ENCODE measurements at regions of chr13 and their contacts with region 1.

Region 1: DNA sequence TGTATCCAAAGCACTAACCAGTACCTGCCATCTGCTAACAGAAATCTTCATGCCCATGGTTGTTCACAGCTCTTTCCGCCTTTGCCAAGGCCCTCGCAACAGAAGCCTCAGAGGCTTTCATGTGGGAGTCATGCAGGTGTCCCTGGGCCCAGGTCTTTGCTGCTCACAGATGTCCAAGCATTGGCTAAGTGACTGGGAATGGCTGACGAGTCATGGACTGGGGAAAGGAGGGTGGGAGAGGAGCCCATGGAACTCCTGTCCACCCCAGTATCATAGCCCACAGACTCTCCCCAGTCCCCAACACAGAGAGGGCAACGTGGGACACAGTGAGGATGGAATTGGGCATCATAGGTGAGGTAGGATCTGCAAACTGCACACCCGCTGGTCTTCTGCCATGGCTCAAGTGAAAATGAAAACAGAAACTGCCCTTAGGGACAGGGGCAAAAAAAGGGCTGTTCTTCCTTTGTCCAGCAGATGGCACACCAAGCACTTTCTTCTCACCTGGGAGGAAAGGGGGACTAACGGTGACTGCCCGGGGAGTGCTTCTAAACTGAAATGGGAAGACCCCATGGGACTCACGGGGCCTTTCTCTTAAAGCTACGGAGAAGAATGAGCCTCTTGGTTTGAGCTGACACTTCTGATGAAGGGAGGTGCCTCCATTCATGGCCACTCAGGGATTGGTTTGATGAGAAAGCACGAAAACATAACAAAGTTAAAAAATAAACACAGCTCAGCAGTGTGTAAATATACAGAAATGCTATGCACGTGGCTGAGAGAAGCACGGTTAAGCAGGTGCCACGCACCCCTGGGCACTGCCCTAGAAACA is 11.1 kb upstream of the DHRS12 start:
- DNase-seq: peak; percentile 48 to 87 (median 77)
- ATAC-seq: peak; percentile 69 to 74
- H3K4me3 Mint-ChIP-seq: peak overlapping the region; percentile 52 to 83 (median 77)
- H3K27ac Mint-ChIP-seq: peak overlapping the region; percentile 91 to 99 (median 96)
- H3K4me1 Mint-ChIP-seq: peaks cover 38 to 89% (median 86%) of the 10 kb centered on the region in 4 donors
- H3K27me3 Mint-ChIP-seq: no peaks in the 10 kb centered on the region

Region 2: DNA sequence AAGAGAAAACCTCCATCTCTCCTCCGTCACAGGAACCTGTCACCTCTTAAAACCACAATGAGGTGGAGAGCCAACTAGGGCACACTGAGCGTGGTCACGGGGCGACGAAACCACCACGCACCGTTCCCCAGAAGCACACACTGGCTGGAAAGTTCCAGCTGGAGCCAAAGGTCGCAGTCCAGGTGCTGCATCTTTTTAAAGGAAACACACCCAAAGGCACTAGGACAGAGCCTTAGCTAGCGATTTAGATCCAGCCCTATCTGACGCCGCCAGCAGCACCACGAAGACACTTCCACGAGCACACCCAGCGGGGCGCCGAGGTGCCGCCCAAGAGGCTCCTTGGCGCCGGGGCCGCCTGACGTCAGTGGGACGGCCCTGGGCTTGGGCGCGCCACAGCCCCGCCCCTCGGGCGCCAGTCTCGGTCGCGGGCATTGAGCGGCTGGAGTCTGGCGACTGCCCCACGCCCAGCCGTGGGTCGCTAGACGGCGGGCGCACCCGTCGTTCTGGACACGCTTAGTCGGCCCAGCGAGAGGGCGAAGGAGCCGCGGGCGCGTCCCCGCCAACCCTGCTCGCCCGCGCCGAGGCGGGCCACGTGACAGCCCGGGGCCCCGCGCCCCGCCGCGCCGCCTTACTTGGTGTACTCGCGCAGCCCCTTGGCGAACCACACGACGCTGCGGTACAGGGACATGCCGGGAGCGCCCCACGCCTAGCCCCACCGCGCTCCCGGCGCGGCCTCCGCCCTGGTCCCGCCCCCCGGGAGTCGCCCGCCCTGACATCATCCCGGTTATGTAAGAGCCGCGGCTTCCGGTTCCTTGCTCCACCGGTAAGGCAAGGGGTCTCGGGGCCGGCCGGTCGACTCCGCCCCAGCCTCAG is 11.4 kb before region 1 on chr13 and contains the start of gene DHRS12:
- POLR2A ChIA-PET with region 1: interaction called, 173 read pairs
- DNase-seq: peak; percentile 77 to 94 (median 88)
- ATAC-seq: peak; percentile 72 to 73
- H3K4me3 Mint-ChIP-seq: peak within 1 kb of the TSS; percentile 89 to 99 (median 95)
- H3K27ac Mint-ChIP-seq: peak within 1 kb of the TSS; percentile 97 to 100 (median 100)
- H3K4me1 Mint-ChIP-seq: peaks cover 19 to 59% (median 55%) of the 10 kb centered on the region in 4 donors
- H3K27me3 Mint-ChIP-seq: peaks cover 0 to 3% (median 0%) of the 10 kb centered on the region in 5 donors
- polyA plus RNA-seq, gene DHRS12: 22.1 to 33.2 (median 26.0) TPM

Region 3: GRCh38 chr13:51825165-51825592 is 10.1 kb after region 1 on chr13:
- POLR2A ChIA-PET with region 1: interaction called, 92 read pairs
- DNase-seq: peak in 4 of 10 donors; percentile 44 to 86 (median 78)
- ATAC-seq: peak; percentile 61 to 72
- H3K4me3 Mint-ChIP-seq: peak overlapping the region; percentile 87 to 99 (median 97)
- H3K27ac Mint-ChIP-seq: peak overlapping the region; percentile 94 to 99 (median 96)
- H3K4me1 Mint-ChIP-seq: peaks cover 56 to 99% (median 74%) of the 10 kb centered on the region in 4 donors
- H3K27me3 Mint-ChIP-seq: no peaks in the 10 kb centered on the region

Region 4: GRCh38 chr13:51832471-51833152 is 17.6 kb after region 1 on chr13:
- POLR2A ChIA-PET with region 1: interaction called, 92 read pairs
- DNase-seq: peak in 9 of 10 donors; percentile 51 to 84 (median 66)
- ATAC-seq: peak; percentile 97 to 98
- H3K4me3 Mint-ChIP-seq: peak overlapping the region in 7 of 10 donors; percentile 46 to 73 (median 56)
- H3K27ac Mint-ChIP-seq: peak overlapping the region; percentile 3 to 91 (median 86)
- H3K4me1 Mint-ChIP-seq: peaks cover 42 to 84% (median 63%) of the 10 kb centered on the region in 4 donors
- H3K27me3 Mint-ChIP-seq: no peaks in the 10 kb centered on the region

Region 5: DNA sequence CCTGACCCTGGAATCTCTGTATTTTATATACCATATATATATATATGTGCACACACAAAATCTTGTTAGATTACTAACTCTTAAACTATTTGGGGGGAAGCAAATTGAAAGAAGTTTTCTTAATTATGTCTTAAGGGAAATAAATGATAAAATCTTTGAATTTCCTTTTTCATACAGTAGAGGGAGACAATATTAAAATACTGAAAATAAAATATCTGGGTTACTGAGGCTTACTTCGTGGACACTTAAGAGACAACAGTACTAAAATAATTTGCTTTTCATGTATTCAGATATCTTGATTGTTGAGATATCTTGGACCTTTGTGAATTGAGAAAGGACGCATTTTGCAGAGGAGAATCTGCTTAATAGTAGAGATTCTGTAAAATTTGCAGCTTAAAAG is 854.6 kb after region 1 on chr13:
- POLR2A ChIA-PET with region 1: no interaction called
- DNase-seq: no peak
- ATAC-seq: no peak
- H3K4me3 Mint-ChIP-seq: no peak overlapping the region
- H3K27ac Mint-ChIP-seq: no peak overlapping the region
- H3K4me1 Mint-ChIP-seq: peaks cover 0 to 11% (median 5%) of the 10 kb centered on the region in 4 donors
- H3K27me3 Mint-ChIP-seq: no peaks in the 10 kb centered on the region

Measured in naive thymus-derived CD8-positive, alpha-beta T cell (primary cell).